ENCODE measurements at regions of chr2 and their contacts with region 1.

Region 1: DNA sequence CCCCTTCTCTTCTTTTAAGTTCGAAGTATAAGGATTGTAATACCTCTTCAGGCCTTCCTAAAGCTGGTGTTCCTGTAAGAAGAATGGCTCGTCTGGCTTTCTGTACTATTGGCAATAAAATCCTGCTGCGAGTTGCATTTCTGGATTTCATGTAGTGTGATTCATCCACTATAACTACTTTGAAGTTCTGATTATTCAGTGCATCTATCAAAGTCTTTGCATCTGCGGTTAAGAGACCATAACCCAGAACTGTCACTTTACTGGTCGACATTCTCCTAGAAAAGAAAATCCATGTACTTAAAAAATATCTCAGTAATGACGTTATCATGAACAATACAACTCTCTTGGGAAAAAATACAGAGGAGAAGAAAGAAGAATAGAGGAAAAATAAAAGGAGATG is 181.1 kb downstream of the ZRANB3 start:
- DNase-seq: no peak
- H3K4me3 ChIP-seq: no peak overlapping the region
- H3K27ac ChIP-seq: no peak overlapping the region
- H3K4me1 ChIP-seq: no peaks in the 10 kb centered on the region
- H3K27me3 ChIP-seq: no peaks in the 10 kb centered on the region
- CTCF ChIP-seq: no peak
- EP300 ChIP-seq: no peak
- POLR2A ChIP-seq: no peak

Region 2: DNA sequence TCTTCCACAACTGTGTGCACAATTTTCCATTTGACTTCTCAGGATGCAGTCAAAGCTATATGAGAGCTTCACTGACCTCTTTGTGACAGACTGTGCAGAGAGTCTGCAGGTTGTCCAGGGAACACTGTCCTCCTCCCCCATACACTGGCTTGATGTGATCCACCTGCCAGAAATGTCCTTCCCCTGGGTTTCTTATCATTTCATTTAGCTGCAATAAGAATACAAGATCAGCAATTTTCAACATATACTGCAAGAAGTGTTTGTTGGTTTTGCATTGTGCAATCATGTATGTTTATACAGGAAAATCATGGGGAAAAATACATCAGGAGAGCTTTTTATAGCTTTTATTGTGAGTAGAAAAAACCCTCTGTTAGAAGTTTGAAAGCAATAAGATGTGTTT is 147.2 kb before region 1 on chr2:
- intact Hi-C with region 1: loop called in 1 of 4 experiments (anchors 5 kb)
- DNase-seq: no peak
- H3K4me3 ChIP-seq: no peak overlapping the region
- H3K27ac ChIP-seq: no peak overlapping the region
- H3K4me1 ChIP-seq: no peaks in the 10 kb centered on the region
- H3K27me3 ChIP-seq: no peaks in the 10 kb centered on the region
- CTCF ChIP-seq: no peak
- EP300 ChIP-seq: no peak
- POLR2A ChIP-seq: no peak